PC-3 (cell line): ENCODE measurements at regions of chr2 and their contacts with region 1.

Region 1: GRCh38 chr2:7097348-7097895 is 180.2 kb downstream of the RNF144A start:
- DNase-seq: peak; percentile 79
- ATAC-seq: peak; percentile 92
- H3K4me3 ChIP-seq: peak overlapping the region; percentile 58
- H3K27ac ChIP-seq: no peak overlapping the region
- H3K4me1 ChIP-seq: no peaks in the 10 kb centered on the region; the same call in 1 of the 2 replicates
- H3K27me3 ChIP-seq: no peaks in the 10 kb centered on the region
- CTCF ChIP-seq: peak; percentile 97

Region 2: DNA sequence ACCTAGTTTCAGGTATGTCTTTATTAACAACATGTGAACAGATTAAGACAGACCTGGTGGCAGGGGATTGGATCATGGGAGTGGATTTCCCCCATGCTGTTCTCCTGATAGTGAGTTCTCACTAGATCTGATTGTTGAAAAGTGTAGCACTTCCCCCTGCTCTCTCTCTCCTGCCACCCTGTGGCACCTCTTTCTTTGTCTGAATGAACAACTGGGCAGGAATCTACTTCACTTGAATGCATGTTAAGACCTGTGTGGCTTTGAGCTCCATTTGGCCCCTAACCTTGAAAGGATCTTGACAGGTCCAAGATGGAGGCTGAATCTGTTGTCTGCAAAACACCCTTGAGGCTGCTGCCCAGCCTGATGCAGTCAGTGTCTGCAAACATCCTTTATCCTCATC is 14.2 kb after region 1 on chr2:
- CTCF ChIA-PET with region 1: interaction called, 5 read pairs
- POLR2A ChIA-PET with region 1: no interaction called
- intact Hi-C with region 1: loop called (anchors 1 kb)
- DNase-seq: peak; percentile 37
- ATAC-seq: peak; percentile 73
- H3K4me3 ChIP-seq: no peak overlapping the region
- H3K27ac ChIP-seq: no peak overlapping the region
- H3K4me1 ChIP-seq: no peaks in the 10 kb centered on the region
- H3K27me3 ChIP-seq: no peaks in the 10 kb centered on the region
- CTCF ChIP-seq: peak; percentile 39; the same call in 1 of the 2 replicates

Region 3: GRCh38 chr2:7165736-7166135 is 68.3 kb after region 1 on chr2:
- CTCF ChIA-PET with region 1: no interaction called
- POLR2A ChIA-PET with region 1: no interaction called
- intact Hi-C with region 1: no loop called
- DNase-seq: peak; percentile 31
- ATAC-seq: no peak
- H3K4me3 ChIP-seq: no peak overlapping the region
- H3K27ac ChIP-seq: no peak overlapping the region
- H3K4me1 ChIP-seq: no peaks in the 10 kb centered on the region; the same call in 1 of the 2 replicates
- H3K27me3 ChIP-seq: no peaks in the 10 kb centered on the region
- CTCF ChIP-seq: no peak

Region 4: DNA sequence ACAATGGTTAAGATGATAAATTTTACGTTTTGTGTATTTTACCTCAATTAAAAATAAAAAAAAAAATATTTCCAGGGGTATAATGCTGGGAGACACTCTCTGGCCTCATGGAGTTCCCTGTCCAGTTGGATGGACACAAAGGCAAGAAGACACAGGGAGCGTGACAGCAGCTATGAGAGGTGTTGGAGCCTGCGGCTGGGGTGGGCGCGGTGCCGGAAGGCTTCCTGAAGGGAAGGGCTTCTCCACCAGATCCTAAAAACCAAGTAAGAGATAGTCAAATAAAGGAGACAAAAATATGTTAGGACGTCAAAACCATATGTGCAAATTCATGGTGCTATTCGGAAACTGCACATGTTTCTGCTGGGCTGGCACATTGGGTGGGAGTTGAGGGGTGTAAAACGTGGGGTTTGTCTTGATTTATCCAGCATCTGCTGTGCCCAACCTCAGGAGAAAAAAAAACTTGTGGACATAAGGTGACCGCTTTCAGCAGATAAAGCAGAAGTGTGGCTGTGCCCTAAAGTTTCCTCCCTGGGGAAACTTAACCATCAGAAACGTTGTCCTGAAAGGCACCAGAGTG is 287.4 kb after region 1 on chr2:
- CTCF ChIA-PET with region 1: no interaction called
- POLR2A ChIA-PET with region 1: interaction called, 18 read pairs
- intact Hi-C with region 1: no loop called
- DNase-seq: no peak
- ATAC-seq: no peak
- H3K4me3 ChIP-seq: no peak overlapping the region
- H3K27ac ChIP-seq: no peak overlapping the region
- H3K4me1 ChIP-seq: no peaks in the 10 kb centered on the region
- H3K27me3 ChIP-seq: no peaks in the 10 kb centered on the region
- CTCF ChIP-seq: no peak

Region 5: DNA sequence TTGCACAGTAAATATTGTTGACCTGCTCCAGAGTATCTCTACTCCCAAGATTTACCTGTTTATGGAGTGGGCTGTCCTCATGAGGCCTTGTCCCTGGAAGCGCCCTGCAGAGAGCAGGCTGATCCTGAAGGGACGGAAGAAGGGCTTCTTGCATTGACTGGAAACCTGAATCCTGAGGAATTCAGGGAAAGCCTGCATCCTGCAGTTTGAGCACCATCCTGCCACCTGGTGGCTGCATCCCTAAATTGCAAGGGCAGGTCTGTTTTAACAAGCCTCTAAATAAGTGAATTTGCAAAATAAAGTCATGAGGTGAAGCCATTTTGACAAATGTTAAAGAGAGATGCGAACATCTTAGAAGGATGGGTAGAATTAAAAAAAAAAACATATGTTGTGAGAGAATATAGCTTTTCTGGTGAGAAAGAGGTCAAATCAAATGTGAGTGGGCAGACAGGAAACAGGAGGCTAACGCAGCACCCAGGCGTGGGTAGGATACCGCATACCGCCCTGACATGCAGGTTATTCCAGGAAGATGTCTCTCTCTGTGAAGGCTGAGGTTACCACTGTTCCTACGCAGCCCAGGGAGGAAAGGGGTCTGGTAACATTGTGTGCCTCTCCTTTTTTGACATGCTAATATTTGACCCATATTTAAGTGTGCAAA is 574.7 kb after region 1 on chr2:
- CTCF ChIA-PET with region 1: no interaction called
- POLR2A ChIA-PET with region 1: no interaction called
- intact Hi-C with region 1: loop called (anchors 5 kb)
- DNase-seq: peak; percentile 88
- ATAC-seq: peak; percentile 74
- H3K4me3 ChIP-seq: no peak overlapping the region
- H3K27ac ChIP-seq: no peak overlapping the region
- H3K4me1 ChIP-seq: 0 out of 2 replicates have a peak, but pooled peaks cover 6% of the 10 kb centered on the region
- H3K27me3 ChIP-seq: no peaks in the 10 kb centered on the region
- CTCF ChIP-seq: peak; percentile 92

Region 6: DNA sequence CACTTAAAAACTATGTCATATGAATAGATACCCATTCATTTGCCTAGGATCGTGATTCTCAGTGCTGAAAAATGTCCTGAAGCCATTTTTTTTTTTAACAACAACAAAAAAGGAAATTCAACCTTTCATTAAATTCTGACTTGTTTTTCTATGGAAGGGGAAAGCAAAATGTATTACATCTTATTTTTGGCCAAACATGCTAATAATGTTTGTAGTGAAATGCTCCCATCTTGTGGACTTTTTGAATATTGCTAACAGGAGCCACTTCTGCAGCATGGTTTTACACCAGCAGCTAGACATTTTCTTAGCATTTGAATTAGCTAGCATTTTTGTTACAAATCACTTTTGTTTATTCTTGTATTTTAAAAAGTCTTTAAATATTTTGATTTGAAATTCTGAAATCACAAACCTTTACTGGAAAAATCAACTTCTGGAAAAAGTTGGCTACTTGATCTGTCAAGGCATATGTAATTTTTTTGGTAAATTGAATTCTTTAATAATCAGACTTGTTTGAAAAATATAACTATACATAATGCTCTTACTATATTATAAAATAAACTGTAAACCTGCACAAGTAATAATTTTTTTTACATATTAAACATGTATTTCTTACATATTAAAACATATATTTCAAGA is 1664.2 kb after region 1 on chr2:
- CTCF ChIA-PET with region 1: no interaction called
- POLR2A ChIA-PET with region 1: no interaction called
- intact Hi-C with region 1: loop called (anchors 1 kb)
- DNase-seq: peak; percentile 77
- ATAC-seq: peak; percentile 50; the same call in 1 of the 2 replicates
- H3K4me3 ChIP-seq: no peak overlapping the region
- H3K27ac ChIP-seq: no peak overlapping the region
- H3K4me1 ChIP-seq: no peaks in the 10 kb centered on the region
- H3K27me3 ChIP-seq: no peaks in the 10 kb centered on the region
- CTCF ChIP-seq: peak; percentile 78